Right ventricle myocardium inferior (tissue), 1 donor: ENCODE measurements at regions of chr1 and their contacts with region 1.

Region 1: DNA sequence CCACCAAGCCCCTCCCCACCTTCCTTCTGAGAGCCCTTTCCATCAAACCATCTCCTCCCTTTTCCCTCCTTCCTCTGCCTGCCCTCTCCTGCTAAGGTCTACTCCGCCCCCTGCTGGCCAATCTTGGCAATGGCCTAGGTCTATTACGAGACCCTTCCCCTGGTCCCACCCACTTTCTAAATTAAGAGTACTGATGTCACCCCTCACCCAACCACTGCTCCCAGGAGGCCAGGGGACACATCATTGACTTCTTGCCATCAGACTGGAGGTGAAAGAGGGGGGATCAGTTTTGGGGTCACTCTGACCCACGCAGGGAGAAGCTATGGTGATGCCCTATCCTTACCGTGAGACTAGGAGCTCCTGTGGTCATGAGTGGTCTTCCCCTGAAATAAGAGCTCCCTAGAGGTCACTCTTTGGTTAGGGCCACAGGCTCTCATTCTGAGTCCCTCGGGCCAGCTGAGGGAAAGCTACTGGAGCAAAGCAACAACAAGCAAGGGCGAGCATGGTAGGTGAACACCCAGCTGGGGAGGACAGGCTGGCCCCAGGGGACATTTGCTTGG is 34.6 kb upstream of the S100A7 start:
- DNase-seq: peak; percentile 91
- ATAC-seq: peak; percentile 50

Region 2: DNA sequence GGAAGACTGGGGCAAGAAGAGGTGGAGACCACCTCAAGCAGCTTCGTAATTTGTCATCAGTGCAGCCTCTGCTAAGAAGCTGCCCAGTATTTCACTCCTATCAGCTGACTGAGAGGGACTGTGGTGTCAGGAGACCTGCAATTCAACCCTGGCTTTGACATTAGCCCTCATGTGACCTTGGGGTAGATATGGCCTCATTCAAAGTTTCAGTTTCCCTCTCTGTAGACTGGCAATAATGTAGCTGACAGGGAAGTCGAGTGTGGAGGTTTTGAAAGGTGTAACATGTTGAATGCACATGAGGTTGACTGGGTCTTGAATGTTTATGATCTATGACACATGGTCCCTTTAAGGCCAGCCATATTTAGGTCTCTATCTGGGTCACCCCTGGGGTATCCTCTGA is 526.8 kb before region 1 on chr1:
- intact Hi-C with region 1: no loop called
- DNase-seq: no peak
- ATAC-seq: no peak

Region 3: GRCh38 chr1:153352523-153352922 is 142.5 kb before region 1 on chr1:
- intact Hi-C with region 1: loop called (anchors 1 kb)
- DNase-seq: peak; percentile 81
- ATAC-seq: peak; percentile 84

Region 4: DNA sequence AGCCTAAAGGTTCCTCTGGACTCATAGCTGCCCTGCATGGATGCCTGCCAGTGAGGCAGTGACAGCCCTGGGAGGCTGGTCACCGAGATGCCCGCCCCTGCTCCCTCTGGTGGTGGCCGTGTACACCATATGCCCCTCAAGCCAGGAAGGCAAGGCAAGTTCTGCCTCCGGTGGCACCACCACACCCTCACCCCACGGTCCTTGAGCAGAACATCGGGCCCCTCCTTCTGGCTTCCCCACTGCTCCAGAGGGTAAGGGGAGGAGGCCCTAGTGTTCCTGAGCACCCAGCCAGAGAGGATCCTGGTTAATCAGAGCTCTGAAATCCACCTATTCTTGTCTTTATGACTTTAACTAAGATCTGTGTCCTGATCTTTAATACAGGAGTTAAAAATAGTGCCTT is 122.6 kb after region 1 on chr1:
- intact Hi-C with region 1: no loop called
- DNase-seq: no peak
- ATAC-seq: no peak

Region 5: GRCh38 chr1:153727463-153728304 is 232.6 kb after region 1 on chr1 and contains the start of gene INTS3:
- intact Hi-C with region 1: no loop called
- DNase-seq: peak; percentile 100
- ATAC-seq: peak; percentile 99
- total RNA-seq, gene INTS3: 33.0 TPM